ENCODE measurements at regions of chr13 and their contacts with region 1.

Region 1: GRCh38 chr13:102394158-102395053 is 7.4 kb downstream of the FGF14 start:
- DNase-seq: peak; percentile 98
- ATAC-seq: peak; percentile 85
- H3K4me3 Mint-ChIP-seq: peak overlapping the region; percentile 82
- H3K27ac Mint-ChIP-seq: peak overlapping the region; percentile 77
- H3K4me1 Mint-ChIP-seq: peaks cover 22% of the 10 kb centered on the region
- H3K27me3 Mint-ChIP-seq: peaks cover 12% of the 10 kb centered on the region

Region 2: DNA sequence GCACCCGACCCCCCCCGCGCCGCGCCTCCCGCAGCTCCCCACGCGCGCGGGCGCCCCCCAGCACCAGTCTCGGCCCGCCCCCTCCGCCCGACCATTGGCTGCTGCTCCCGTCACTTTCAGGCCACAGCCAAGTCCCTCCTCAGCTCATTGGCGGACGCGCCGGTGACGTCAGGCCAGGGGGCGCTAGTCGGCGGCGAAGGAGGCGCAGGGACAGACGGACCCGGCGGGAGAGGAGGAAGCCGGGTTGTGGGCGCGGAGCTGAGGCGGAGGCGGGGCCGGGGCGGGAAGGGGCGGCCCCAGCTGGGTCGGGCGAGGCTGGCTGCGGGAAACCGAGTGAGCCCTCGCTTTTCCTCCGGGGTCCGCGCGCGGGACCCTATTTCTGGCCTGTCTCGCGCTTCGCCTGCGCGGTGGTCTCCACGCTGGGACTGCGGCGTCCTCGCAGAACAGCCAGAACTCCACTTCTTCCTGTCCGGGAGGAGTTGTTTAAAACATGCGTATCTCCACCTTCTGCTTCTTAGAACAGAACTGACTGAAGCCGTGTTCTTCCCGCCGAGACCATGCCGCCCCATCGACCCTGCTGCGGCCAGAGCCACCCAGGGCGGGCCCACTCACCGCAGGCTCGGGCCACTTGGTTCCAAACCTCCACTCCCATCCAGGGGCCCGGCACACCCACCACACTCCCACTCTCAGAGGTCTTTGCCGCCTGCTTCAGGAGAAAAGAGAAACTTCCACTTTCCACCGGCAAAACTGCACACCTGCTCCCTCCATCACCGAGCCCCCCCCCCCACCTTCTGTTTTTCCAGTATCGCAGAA is 1719.4 kb before region 1 on chr13:
- CTCF ChIA-PET with region 1: no interaction called
- POLR2A ChIA-PET with region 1: no interaction called
- intact Hi-C with region 1: loop called in 1 of 2 experiments (anchors 1 kb)
- DNase-seq: peak; percentile 99
- ATAC-seq: peak; percentile 96
- H3K4me3 Mint-ChIP-seq: peak overlapping the region; percentile 77
- H3K27ac Mint-ChIP-seq: peak overlapping the region; percentile 83
- H3K4me1 Mint-ChIP-seq: peaks cover 23% of the 10 kb centered on the region
- H3K27me3 Mint-ChIP-seq: peaks cover 7% of the 10 kb centered on the region

Region 3: DNA sequence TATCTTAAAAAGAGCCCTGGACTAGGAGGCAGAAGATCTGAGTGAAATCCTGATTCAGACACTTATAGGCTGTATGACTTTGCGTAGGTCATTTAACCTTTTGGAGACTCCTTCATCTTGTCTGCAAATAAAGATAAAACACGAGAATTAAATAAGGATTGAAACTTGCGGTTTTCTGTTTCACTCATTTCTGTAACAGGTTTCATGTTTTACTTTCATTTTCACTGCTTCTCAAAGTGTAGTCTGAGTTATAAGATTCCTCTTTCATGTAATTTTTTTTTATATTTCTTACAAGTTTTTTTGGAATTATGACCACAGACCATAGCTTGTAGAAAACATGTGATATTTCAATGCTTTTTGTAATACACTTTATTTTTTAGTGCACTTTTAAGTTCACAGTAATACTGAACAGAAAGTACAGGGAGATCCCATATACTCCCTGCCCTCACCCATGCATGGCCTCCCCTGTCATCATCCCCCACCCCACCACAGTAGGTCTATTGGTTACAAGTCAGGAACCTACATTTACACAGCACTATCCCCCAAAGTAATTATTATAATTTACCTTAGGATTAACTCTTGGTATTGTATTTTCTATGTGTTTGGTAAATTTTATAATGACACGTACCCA is 767.4 kb before region 1 on chr13:
- CTCF ChIA-PET with region 1: no interaction called
- POLR2A ChIA-PET with region 1: no interaction called
- intact Hi-C with region 1: loop called in 1 of 2 experiments (anchors 5 kb)
- DNase-seq: peak; percentile 53
- ATAC-seq: peak; percentile 86
- H3K4me3 Mint-ChIP-seq: peak overlapping the region; percentile 1
- H3K27ac Mint-ChIP-seq: no peak overlapping the region
- H3K4me1 Mint-ChIP-seq: peaks cover 42% of the 10 kb centered on the region
- H3K27me3 Mint-ChIP-seq: peaks cover 13% of the 10 kb centered on the region

Region 4: DNA sequence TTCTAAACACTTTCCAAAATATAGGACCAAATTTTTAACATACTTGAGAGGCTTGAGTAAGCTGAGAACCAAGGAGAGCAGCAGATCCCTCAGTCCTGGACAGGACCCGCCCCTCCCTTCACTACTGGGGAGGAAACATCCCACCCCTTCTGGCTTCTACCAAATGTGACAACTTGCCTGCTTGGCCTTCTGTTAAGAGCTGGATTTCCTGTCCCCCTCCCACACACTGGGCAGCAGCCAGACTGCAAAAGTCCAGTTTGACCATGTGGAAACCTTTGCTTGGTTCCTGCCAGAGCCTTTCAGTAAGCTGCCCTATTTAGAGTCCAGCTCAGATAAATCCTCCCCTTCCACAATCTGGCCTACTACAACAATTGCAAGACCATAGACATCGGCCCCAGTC is 76.8 kb before region 1 on chr13:
- CTCF ChIA-PET with region 1: no interaction called
- POLR2A ChIA-PET with region 1: no interaction called
- intact Hi-C with region 1: no loop called
- DNase-seq: no peak
- ATAC-seq: no peak
- H3K4me3 Mint-ChIP-seq: no peak overlapping the region
- H3K27ac Mint-ChIP-seq: no peak overlapping the region
- H3K4me1 Mint-ChIP-seq: no peaks in the 10 kb centered on the region
- H3K27me3 Mint-ChIP-seq: peaks cover 10% of the 10 kb centered on the region

Region 5: GRCh38 chr13:102369302-102369701 is 25.1 kb before region 1 on chr13:
- CTCF ChIA-PET with region 1: no interaction called
- POLR2A ChIA-PET with region 1: no interaction called
- intact Hi-C with region 1: no loop called
- DNase-seq: no peak
- ATAC-seq: no peak
- H3K4me3 Mint-ChIP-seq: no peak overlapping the region
- H3K27ac Mint-ChIP-seq: no peak overlapping the region
- H3K4me1 Mint-ChIP-seq: no peaks in the 10 kb centered on the region
- H3K27me3 Mint-ChIP-seq: peaks cover 7% of the 10 kb centered on the region

Region 6: DNA sequence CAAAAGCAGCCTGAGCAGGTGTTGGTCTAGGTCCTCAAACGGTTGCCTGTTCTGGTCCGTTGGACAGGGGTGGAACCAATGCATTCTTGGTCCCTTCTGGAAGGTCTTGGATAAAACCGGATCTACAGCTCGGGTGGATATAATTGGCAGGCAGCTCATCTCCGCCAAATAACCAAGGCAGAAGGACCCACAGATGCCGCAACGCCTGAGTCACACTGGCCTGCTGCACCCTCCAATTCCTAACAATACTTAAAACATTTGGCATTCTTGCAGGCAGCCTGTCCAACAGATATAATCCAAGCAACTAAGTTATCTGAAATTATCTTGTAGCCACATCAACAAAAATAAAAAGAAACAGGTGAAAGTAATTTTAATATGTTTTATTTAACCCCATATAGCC is 66.4 kb after region 1 on chr13:
- CTCF ChIA-PET with region 1: no interaction called
- POLR2A ChIA-PET with region 1: interaction called, 4 read pairs
- intact Hi-C with region 1: loop called in 1 of 2 experiments (anchors 2 kb)
- DNase-seq: no peak
- ATAC-seq: no peak
- H3K4me3 Mint-ChIP-seq: no peak overlapping the region
- H3K27ac Mint-ChIP-seq: no peak overlapping the region
- H3K4me1 Mint-ChIP-seq: peaks cover 6% of the 10 kb centered on the region
- H3K27me3 Mint-ChIP-seq: peaks cover 15% of the 10 kb centered on the region

Region 7: DNA sequence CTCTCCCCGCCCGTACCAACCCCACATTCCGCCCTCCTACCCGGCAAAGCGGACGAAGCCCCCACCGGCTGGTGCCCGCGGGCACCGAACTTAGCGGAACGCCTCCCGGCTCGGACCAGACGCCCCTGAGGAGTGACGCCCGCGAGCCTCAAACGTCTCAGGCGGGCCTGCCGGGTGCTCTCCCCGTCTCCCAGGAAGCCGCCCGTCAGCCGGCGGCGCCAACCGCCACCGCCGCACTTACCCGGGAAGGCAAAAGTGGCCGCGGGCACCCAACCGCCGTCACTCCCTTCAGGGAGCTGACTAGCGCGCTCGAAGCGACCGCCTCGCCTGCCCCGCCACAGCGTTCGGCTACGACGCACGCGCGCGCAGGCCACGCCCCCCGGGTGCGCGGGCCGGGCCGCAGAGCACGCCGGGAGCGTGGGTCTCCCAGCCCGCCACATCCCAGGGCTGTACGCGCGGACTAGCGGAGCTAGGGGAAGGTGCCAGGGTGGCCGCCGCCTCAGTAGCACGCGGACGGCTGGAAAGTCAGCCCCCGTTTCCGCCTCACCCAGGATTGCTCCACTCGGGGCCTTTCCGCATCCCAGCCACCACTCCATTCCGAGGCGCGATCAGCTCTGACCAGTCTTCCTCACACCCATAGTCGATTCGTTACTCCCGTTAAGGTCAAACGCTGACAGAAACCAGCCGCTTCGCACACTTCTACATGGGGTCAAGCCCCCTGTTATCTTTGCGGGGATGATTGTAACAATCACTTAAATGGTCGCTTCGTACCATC is 379.2 kb after region 1 on chr13 and contains the start of gene TEX30:
- CTCF ChIA-PET with region 1: no interaction called
- POLR2A ChIA-PET with region 1: no interaction called
- intact Hi-C with region 1: loop called (anchors 2 to 10 kb)
- DNase-seq: peak; percentile 91
- ATAC-seq: peak; percentile 97
- H3K4me3 Mint-ChIP-seq: peak within 1 kb of the TSS; percentile 73
- H3K27ac Mint-ChIP-seq: peak within 1 kb of the TSS; percentile 93
- H3K4me1 Mint-ChIP-seq: peaks cover 48% of the 10 kb centered on the region
- H3K27me3 Mint-ChIP-seq: no peaks in the 10 kb centered on the region
- total RNA-seq, gene TEX30: 21.5 to 25.8 TPM

Region 8: DNA sequence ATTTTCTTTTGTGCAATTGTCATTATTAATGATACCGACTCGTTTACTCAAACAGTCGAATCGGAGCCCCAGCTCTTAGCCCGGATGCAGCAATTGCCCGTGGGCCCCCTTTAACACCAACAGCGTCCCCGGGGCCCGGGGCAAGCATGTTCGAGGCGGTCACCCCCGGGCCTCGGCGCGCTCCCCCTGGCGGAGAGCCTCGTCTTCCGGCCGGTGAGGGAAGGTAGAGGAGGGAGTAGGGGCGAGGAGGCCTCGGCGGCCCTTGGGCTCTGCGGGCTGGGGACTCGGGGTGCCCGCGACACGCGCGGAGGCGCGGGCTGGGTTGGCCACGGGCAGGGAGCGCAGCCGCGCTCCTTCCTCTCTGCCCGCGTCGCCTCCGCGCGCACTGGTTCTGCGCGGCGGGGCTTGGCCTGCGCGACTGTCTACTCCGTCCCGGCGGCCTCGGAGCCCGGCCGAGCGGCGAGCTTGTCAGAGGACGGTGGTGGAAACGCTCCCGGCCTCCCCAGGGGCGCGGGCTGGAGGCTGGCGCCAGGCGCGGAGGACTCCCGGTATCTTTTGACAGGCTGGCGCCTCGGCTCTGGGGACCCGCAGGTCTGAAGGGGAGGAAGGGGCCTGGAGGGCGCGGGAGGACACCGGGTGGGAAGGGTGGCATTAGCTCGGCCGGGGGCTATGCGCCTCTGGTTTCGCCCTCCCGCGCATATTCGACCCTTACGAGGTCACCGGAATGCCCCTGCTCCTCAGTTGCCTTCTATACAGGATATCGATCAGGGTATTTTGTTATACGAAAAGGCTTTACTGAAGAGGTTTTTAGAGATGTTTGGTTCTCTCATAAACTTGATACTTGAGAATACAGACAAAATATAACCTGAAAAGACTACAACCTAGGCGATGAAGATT is 406.0 kb after region 1 on chr13:
- CTCF ChIA-PET with region 1: no interaction called
- POLR2A ChIA-PET with region 1: no interaction called
- intact Hi-C with region 1: loop called in 1 of 2 experiments (anchors 1 kb)
- DNase-seq: peak; percentile 91
- ATAC-seq: peak; percentile 81
- H3K4me3 Mint-ChIP-seq: peak overlapping the region; percentile 89
- H3K27ac Mint-ChIP-seq: peak overlapping the region; percentile 73
- H3K4me1 Mint-ChIP-seq: peaks cover 26% of the 10 kb centered on the region
- H3K27me3 Mint-ChIP-seq: peaks cover 6% of the 10 kb centered on the region

Region 9: GRCh38 chr13:102845630-102846260 is 451.3 kb after region 1 on chr13 and contains the start of gene ERCC5:
- CTCF ChIA-PET with region 1: no interaction called
- POLR2A ChIA-PET with region 1: no interaction called
- intact Hi-C with region 1: loop called (anchors 1 to 10 kb)
- DNase-seq: peak; percentile 97
- ATAC-seq: peak; percentile 87
- H3K4me3 Mint-ChIP-seq: peak within 1 kb of the TSS; percentile 99
- H3K27ac Mint-ChIP-seq: peak within 1 kb of the TSS; percentile 98
- H3K4me1 Mint-ChIP-seq: peaks cover 32% of the 10 kb centered on the region
- H3K27me3 Mint-ChIP-seq: no peaks in the 10 kb centered on the region
- total RNA-seq, gene ERCC5: 74.8 to 79.1 TPM

Measured in activated CD4-positive, alpha-beta T cell treated with anti-CD3 and anti-CD28 coated beads for 36 hours (primary cell).